Posterior vena cava (tissue), 2 donors: ENCODE measurements at regions of chr1 and their contacts with region 1.

Region 1: GRCh38 chr1:152426731-152427130 is 12.7 kb upstream of the CRNN start:
- DNase-seq: no peak

Region 2: GRCh38 chr1:151710187-151710840 is 716.4 kb before region 1 on chr1:
- intact Hi-C with region 1: no loop called
- DNase-seq: no peak

Region 3: DNA sequence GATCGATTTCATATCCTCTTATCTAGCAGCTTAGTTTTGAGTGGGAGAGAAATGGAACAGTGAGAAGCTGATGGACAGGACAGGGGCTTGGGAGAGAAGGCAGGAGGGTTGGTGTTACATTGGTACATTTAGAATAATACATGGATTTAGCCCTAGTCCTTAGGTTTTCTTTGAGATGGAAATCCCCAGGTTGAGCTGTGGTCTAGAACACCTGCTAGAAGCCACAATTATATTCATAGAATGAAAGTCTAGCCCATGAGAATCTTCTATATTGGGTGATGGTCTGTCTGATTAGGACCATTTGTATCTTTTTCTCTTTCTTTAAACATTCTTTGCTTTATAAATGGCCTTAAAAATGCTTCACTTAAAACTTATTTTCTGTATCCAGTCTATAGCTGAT is 32.6 kb before region 1 on chr1:
- intact Hi-C with region 1: loop called in 1 of 2 experiments (anchors 2 kb)
- DNase-seq: no peak

Region 4: GRCh38 chr1:152479792-152480595 is 53.3 kb after region 1 on chr1:
- intact Hi-C with region 1: loop called in 1 of 2 experiments (anchors 1 kb)
- DNase-seq: no peak